Dorsolateral prefrontal cortex (tissue), 120 donors: ENCODE measurements at regions of chr12 and their contacts with region 1.

Region 1: GRCh38 chr12:43586646-43587245 is 34.7 kb upstream of the ADAMTS20 start:
- DNase-seq: no peak
- H3K4me3 ChIP-seq: no peak overlapping the region
- H3K27ac ChIP-seq: no peak overlapping the region
- H3K27me3 ChIP-seq: peaks cover 0 to 1% (median 0%) of the 10 kb centered on the region in 45 donors
- CTCF ChIP-seq: no peak

Region 2: DNA sequence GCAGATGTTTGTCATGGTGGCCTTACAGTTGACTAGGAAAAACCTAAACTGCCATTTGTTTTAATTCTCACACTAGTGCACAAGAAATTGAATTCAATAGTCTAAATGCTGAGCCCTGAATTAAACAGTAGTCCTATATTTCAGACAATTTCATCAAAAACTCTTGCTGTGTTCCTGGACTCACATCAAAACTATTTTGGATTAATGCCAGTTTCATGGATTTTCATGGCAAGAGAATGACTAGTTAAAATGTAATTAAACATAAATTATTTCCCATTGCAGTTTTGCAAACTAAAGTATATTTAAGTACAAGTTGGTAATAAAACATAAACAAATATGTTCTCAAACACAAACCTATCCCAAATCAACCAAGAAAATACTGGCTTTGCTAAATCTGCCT is 529.2 kb before region 1 on chr12:
- intact Hi-C with region 1: no loop called
- DNase-seq: no peak
- H3K4me3 ChIP-seq: no peak overlapping the region
- H3K27ac ChIP-seq: no peak overlapping the region
- H3K27me3 ChIP-seq: no peaks in the 10 kb centered on the region
- CTCF ChIP-seq: no peak

Region 3: GRCh38 chr12:43556057-43556456 is 30.7 kb before region 1 on chr12:
- intact Hi-C with region 1: loop called in 1 of 2 experiments (anchors 2 kb)
- DNase-seq: no peak
- H3K4me3 ChIP-seq: no peak overlapping the region
- H3K27ac ChIP-seq: no peak overlapping the region
- H3K27me3 ChIP-seq: peaks cover 0 to 35% (median 22%) of the 10 kb centered on the region in 45 donors
- CTCF ChIP-seq: no peak

Region 4: GRCh38 chr12:43638806-43639205 is 52.1 kb after region 1 on chr12:
- intact Hi-C with region 1: no loop called
- DNase-seq: no peak
- H3K4me3 ChIP-seq: no peak overlapping the region
- H3K27ac ChIP-seq: no peak overlapping the region
- H3K27me3 ChIP-seq: peaks cover 0 to 11% (median 0%) of the 10 kb centered on the region in 45 donors
- CTCF ChIP-seq: no peak